ENCODE measurements at regions of chr9 and their contacts with region 1.

Region 1: GRCh38 chr9:127770905-127771569 is 7.4 kb downstream of the SH2D3C start:
- DNase-seq: peak; percentile 97
- H3K4me3 ChIP-seq: peak overlapping the region; percentile 56
- H3K27ac ChIP-seq: no peak overlapping the region
- H3K27me3 ChIP-seq: no peaks in the 10 kb centered on the region
- CTCF ChIP-seq: no peak

Region 2: GRCh38 chr9:127869310-127870152 is 98.5 kb after region 1 on chr9:
- in situ Hi-C with region 1: loop called (anchors 25 kb)
- DNase-seq: peak; percentile 65
- H3K4me3 ChIP-seq: no peak overlapping the region
- H3K27ac ChIP-seq: no peak overlapping the region
- H3K27me3 ChIP-seq: no peaks in the 10 kb centered on the region
- CTCF ChIP-seq: peak; percentile 96

Measured in brain microvascular endothelial cell (primary cell).